Right lobe of liver (tissue), 6 donors: ENCODE measurements at regions of chr7 and their contacts with region 1.

Region 1: GRCh38 chr7:123865517-123866117 is 20.6 kb downstream of the HYAL4 start:
- DNase-seq: no peak
- ATAC-seq: peak; percentile 91 to 95 (median 93)
- H3K4me3 ChIP-seq: no peak overlapping the region
- H3K27ac ChIP-seq: no peak overlapping the region
- H3K4me1 ChIP-seq: peaks cover 0 to 5% (median 0%) of the 10 kb centered on the region in 4 donors
- H3K27me3 ChIP-seq: no peaks in the 10 kb centered on the region
- CTCF ChIP-seq: peak; percentile 75 to 78 (median 77)
- POLR2A ChIP-seq: no peak

Region 2: DNA sequence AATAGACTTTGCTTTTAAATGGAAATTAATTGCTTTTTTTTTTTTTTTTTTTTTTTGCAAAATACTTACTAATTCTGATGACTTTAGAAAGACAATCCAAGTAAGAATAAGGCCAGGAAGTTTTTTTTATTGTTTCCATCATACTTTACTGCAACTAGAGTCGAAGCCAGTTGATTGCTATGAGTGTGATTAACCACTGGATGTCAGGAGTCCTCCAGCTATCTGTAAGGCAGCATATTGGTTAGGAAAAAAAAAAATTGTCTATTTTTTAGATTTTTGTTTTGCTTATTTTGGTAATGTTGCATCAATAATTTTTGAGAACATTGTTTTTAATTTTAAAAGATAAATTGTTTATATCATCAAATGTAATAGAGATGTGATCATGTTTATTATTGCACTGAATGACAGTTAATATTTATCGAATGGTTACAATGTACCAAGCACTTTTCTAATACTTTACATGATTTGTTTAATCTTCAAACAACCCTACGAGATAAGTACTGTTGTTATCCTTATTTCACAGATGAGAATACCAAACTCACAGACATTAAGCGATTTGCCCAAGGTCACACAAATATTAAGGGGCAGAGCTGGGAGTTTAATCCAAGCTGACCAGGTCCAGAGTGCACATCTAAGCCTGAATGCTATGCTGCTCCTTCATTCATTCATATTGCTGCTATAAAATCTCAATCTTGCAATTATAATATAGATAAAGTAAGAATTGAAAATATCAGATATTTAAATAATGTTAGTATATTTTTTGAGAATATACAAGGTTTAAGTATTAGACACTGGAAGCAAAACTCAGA is 229.9 kb before region 1 on chr7:
- intact Hi-C with region 1: loop called in 1 of 2 experiments (anchors 10 kb)
- DNase-seq: no peak
- ATAC-seq: peak; percentile 81 to 96 (median 90)
- H3K4me3 ChIP-seq: no peak overlapping the region
- H3K27ac ChIP-seq: no peak overlapping the region
- H3K4me1 ChIP-seq: no peaks in the 10 kb centered on the region
- H3K27me3 ChIP-seq: no peaks in the 10 kb centered on the region
- CTCF ChIP-seq: peak; percentile 58 to 79 (median 72)
- POLR2A ChIP-seq: no peak

Region 3: DNA sequence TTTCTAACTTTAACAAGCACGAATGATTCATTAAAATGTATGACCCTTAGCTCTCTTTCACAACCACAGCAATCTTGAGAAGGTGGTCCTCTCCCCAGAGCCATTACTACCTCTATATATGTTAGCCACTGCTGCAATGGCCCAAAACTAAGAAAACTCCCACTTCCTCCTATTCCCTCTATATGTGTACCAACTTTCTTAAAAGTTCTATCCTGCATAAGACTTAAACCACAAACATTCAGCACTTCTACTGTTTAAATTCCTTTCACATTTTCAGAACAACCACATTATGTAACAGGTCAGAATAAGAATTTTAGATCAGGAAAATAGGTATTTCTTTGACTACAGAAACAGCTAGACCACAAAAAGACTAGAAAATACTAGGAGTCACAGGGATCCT is 153.0 kb before region 1 on chr7:
- intact Hi-C with region 1: no loop called
- DNase-seq: no peak
- ATAC-seq: no peak
- H3K4me3 ChIP-seq: no peak overlapping the region
- H3K27ac ChIP-seq: no peak overlapping the region
- H3K4me1 ChIP-seq: peaks cover 0 to 10% (median 5%) of the 10 kb centered on the region in 4 donors
- H3K27me3 ChIP-seq: no peaks in the 10 kb centered on the region
- CTCF ChIP-seq: no peak
- POLR2A ChIP-seq: no peak

Region 4: DNA sequence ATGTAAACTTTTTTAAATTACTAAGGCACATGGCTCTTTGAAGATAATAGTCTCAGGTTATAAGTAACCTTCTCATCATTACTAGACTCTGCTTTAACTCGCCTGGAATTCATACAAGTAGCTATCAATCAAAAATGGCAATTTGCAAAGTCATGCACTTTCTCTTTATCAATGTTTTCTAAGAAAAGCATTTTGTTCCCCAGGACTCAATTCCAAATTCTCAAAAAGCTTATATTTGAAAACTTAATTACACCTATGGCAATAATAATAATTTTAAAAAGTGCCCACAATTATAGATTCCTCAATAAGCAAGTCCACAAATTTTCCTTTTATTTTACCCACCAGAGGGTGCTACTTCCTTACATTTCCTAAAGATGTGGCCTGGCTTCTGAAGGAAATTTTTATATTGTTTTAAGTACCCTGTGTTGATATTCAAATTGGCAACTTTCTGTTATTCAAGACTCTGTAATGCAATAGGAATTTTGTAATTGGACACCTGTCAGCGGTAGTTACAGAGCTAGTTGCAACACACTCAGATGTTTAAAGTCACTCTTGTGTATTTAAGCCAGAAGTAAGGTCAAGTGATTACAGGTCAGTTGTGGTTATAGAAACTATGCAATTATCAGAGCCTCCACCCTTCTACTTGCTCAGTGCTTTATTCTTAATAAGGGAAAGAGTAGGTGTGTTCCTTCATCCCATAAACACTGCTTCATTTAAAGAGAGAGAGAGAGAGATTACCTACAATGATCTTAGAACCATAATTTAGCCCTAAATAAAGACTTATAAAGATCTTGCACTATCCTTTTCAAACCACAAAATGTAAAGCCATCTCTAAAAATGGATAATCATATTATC is 67.7 kb before region 1 on chr7:
- intact Hi-C with region 1: loop called (anchors 10 kb)
- DNase-seq: no peak
- ATAC-seq: peak; percentile 88 to 99 (median 95)
- H3K4me3 ChIP-seq: no peak overlapping the region
- H3K27ac ChIP-seq: peak overlapping the region in 1 of 3 donors; percentile 12
- H3K4me1 ChIP-seq: peaks cover 0 to 16% (median 5%) of the 10 kb centered on the region in 4 donors
- H3K27me3 ChIP-seq: no peaks in the 10 kb centered on the region
- CTCF ChIP-seq: peak; percentile 41 to 51 (median 48)
- POLR2A ChIP-seq: no peak

Region 5: DNA sequence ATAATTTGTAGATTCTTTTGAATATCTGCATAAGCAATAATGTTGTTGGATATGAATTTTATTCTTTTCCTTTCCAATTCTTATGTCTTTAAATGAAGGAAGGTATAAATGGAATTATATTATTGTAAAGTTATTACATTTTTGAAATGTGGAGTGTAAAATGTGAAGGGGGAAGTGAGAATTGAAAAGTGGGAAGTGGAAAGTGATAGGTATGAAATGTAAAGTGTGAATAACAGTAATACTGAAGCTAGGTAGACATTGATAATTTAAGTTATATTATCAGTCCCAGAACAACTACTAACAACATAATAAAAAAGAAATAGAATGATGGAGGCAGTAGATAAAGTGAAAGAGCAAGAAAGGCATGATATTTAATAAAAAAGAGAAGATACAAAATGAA is 60.3 kb before region 1 on chr7:
- intact Hi-C with region 1: loop called in 1 of 2 experiments (anchors 10 kb)
- DNase-seq: no peak
- ATAC-seq: no peak
- H3K4me3 ChIP-seq: no peak overlapping the region
- H3K27ac ChIP-seq: no peak overlapping the region
- H3K4me1 ChIP-seq: no peaks in the 10 kb centered on the region
- H3K27me3 ChIP-seq: no peaks in the 10 kb centered on the region
- CTCF ChIP-seq: no peak
- POLR2A ChIP-seq: no peak